ENCODE measurements at regions of chr11 and their contacts with region 1.

Region 1: GRCh38 chr11:2151500-2152257 is 9.3 kb downstream of the INS start:
- DNase-seq: peak; percentile 54
- ATAC-seq: peak; percentile 76
- H3K4me3 ChIP-seq: no peak overlapping the region
- H3K27ac ChIP-seq: no peak overlapping the region
- H3K4me1 ChIP-seq: no peaks in the 10 kb centered on the region
- H3K27me3 ChIP-seq: peaks cover 41% of the 10 kb centered on the region
- CTCF ChIP-seq: peak; percentile 78
- POLR2A ChIP-seq: no peak
- RAD21 ChIP-seq: peak; percentile 77

Region 2: DNA sequence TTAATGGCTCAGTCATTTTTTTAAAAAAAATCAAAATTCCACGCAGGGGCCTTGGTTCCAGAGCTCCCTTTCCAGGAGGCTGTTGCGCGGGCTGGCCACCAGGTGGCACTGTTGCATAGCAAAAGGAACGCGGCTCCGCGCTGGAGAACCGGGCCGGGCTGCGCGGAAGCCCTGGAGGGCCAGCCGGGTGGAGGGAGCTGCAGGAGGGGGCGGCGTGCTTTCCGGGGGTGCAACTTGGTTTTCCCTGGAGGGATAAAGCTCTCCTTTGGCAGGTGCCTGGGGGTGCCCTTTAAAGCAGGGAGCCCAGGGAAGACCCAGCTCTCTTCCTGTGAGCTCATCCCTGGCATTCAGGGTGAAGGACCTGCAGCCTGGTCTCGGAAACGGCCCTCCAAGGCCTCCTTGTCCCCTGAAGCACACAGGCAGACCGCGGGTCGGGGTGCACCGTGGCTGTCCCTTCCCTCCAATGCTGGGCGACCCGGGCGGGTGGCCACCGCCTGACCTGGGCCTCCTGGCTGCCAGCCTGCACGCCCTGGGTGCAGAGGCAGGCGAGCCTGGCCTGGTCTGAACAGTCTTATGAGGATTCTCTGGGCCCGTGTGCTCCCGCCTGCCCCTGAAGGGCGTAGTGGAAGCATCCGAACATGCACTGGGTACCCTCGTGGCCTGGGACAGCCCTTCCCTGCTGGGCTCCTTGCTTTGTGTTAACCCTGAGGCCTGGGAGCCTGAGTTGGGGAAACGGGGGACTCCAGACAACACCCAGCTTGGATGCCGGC is 498.7 kb before region 1 on chr11:
- CTCF ChIA-PET with region 1: interaction called, 9 read pairs
- POLR2A ChIA-PET with region 1: no interaction called
- dilution Hi-C with region 1: no loop called
- in situ Hi-C with region 1: no loop called
- intact Hi-C with region 1: loop called (anchors 2 kb)
- DNase-seq: peak; percentile 29
- ATAC-seq: peak; percentile 97
- H3K4me3 ChIP-seq: no peak overlapping the region
- H3K27ac ChIP-seq: no peak overlapping the region
- H3K4me1 ChIP-seq: no peaks in the 10 kb centered on the region; the same call in 1 of the 2 replicates
- H3K27me3 ChIP-seq: peaks cover 51% of the 10 kb centered on the region
- CTCF ChIP-seq: peak; percentile 93
- POLR2A ChIP-seq: no peak
- RAD21 ChIP-seq: peak; percentile 90

Region 3: DNA sequence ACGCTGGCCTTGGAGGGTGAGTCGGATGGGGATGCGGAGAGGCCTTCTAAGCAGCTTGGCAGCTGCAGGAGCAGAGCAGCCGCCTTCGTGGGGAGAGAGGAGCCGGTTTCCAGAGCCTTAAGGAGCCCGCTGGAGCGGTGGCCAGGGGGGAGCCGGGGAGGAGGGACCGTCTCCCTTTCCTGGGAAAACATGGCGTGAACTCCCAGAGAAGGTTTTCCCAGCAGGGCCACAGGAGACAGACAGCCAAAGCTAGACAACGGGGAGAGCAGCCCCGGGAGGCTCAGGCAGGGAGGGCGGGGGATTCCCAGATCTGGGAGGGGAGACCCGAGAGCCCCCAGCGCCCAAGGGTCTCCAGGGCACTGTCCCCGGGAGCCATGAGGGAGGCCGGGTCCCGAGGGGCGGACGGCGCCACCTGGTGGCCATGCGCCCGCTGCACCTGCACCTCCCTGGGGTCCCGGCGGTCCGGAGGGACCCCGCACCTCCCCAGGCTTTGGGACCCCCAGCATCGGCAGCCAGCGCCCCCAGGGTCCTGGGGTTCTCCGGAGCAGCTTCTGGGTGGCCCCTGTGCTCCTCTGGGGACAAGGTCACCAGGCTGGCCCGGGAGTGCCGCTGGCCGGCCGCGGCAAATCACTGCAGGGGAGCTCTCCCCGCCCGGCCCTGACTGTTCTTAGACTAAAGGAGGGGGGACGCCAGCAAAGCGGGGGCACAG is 319.3 kb before region 1 on chr11:
- CTCF ChIA-PET with region 1: interaction called, 10 read pairs
- POLR2A ChIA-PET with region 1: no interaction called
- dilution Hi-C with region 1: no loop called
- in situ Hi-C with region 1: no loop called
- intact Hi-C with region 1: loop called (anchors 1 kb)
- DNase-seq: no peak
- ATAC-seq: peak; percentile 62; the same call in 1 of the 2 replicates
- H3K4me3 ChIP-seq: no peak overlapping the region
- H3K27ac ChIP-seq: no peak overlapping the region
- H3K4me1 ChIP-seq: peaks cover 8% of the 10 kb centered on the region
- H3K27me3 ChIP-seq: peaks cover 16% of the 10 kb centered on the region; the same call in 1 of the 2 replicates
- CTCF ChIP-seq: peak; percentile 80
- POLR2A ChIP-seq: no peak
- RAD21 ChIP-seq: peak; percentile 83

Region 4: DNA sequence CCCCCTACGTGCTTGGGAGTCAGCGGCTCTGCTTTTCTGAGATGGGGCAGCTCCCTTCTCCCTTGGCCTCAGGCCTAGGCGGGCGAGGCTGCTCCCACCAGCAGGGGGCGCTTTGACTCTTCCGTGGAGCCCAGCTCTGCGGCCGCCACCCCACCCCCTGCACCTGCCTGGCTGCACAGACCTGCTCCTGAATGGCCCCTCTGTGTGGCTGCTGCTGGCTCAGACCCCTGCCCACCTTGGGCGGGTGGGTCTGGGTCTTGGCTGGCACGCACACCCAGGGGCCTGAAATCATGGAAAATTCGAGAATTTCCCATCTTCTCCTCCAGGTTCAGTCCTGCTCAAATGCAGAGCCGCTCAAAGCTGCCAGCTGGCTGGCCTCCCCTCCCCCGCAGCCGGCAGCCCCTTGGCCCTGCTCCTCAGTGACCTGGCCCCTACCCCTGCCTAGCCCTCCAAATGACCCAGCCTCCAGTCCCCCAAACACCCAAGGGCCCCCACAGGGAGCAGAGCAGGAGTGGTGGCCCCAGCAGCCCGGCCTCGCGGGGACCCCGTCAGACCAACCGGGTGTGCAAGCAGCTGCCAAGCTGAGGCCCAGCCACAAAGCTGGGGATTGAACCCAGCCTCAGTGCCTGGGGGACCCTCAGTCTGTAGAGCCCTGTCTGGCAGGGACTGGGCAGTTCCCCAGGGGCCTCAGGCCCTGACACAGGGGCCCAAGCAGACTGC is 269.0 kb before region 1 on chr11:
- CTCF ChIA-PET with region 1: interaction called, 4 read pairs
- POLR2A ChIA-PET with region 1: no interaction called
- dilution Hi-C with region 1: no loop called
- in situ Hi-C with region 1: loop called (anchors 5 kb)
- intact Hi-C with region 1: loop called (anchors 1 kb)
- DNase-seq: peak; percentile 41
- ATAC-seq: peak; percentile 97
- H3K4me3 ChIP-seq: no peak overlapping the region
- H3K27ac ChIP-seq: no peak overlapping the region
- H3K4me1 ChIP-seq: no peaks in the 10 kb centered on the region
- H3K27me3 ChIP-seq: peaks cover 20% of the 10 kb centered on the region
- CTCF ChIP-seq: peak; percentile 86
- POLR2A ChIP-seq: no peak
- RAD21 ChIP-seq: peak; percentile 78

Region 5: DNA sequence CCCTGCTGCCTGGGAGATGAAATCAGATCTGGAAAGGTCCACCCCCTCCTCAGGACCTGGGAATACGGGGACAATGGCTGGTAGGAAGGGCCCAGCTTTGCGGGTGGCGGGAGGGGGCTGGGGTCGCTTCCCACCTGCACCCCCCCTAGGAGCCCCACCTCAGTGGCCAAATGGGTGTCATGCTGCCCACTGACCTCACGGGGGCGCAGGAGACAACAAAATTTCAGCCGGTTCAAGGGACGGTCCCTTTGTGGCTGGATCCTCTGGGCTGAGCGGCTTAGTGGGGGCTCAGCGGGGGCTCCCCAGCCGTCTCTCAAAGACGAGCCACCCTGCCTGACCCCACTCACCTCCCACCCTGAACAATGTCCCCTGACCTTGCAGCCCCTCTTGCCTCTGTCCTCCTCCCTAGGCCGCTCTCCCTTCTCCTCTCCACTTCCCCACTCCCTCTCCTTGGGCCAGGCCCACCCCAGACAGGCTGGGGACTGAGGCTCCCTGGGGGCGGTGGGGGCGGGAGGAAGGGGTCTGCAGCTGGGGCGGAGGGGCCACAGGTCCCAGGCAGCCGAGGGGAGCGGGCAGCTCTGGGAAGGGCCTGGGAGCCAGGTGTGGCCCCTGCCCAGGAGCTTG is 114.7 kb before region 1 on chr11:
- CTCF ChIA-PET with region 1: interaction called, 98 read pairs
- POLR2A ChIA-PET with region 1: interaction called, 3 read pairs
- dilution Hi-C with region 1: no loop called
- in situ Hi-C with region 1: no loop called
- intact Hi-C with region 1: no loop called
- DNase-seq: no peak
- ATAC-seq: peak; percentile 88
- H3K4me3 ChIP-seq: no peak overlapping the region
- H3K27ac ChIP-seq: no peak overlapping the region
- H3K4me1 ChIP-seq: no peaks in the 10 kb centered on the region
- H3K27me3 ChIP-seq: no peaks in the 10 kb centered on the region
- CTCF ChIP-seq: no peak
- POLR2A ChIP-seq: no peak
- RAD21 ChIP-seq: no peak

Region 6: GRCh38 chr11:2992234-2992996 is 840.7 kb after region 1 on chr11 and contains the start of gene NAP1L4:
- CTCF ChIA-PET with region 1: no interaction called
- POLR2A ChIA-PET with region 1: no interaction called
- dilution Hi-C with region 1: no loop called
- in situ Hi-C with region 1: no loop called
- intact Hi-C with region 1: no loop called
- DNase-seq: peak; percentile 95
- ATAC-seq: peak; percentile 91
- H3K4me3 ChIP-seq: peak within 1 kb of the TSS; percentile 92
- H3K27ac ChIP-seq: peak within 1 kb of the TSS; percentile 92
- H3K4me1 ChIP-seq: peaks cover 10% of the 10 kb centered on the region
- H3K27me3 ChIP-seq: no peaks in the 10 kb centered on the region
- CTCF ChIP-seq: no peak
- POLR2A ChIP-seq: peak; percentile 73
- RAD21 ChIP-seq: no peak
- total RNA-seq, gene NAP1L4: 71.5 and 80.8 TPM in 2 replicates